PC-9 (cell line): ENCODE measurements at regions of chr17 and their contacts with region 1.

Region 1: DNA sequence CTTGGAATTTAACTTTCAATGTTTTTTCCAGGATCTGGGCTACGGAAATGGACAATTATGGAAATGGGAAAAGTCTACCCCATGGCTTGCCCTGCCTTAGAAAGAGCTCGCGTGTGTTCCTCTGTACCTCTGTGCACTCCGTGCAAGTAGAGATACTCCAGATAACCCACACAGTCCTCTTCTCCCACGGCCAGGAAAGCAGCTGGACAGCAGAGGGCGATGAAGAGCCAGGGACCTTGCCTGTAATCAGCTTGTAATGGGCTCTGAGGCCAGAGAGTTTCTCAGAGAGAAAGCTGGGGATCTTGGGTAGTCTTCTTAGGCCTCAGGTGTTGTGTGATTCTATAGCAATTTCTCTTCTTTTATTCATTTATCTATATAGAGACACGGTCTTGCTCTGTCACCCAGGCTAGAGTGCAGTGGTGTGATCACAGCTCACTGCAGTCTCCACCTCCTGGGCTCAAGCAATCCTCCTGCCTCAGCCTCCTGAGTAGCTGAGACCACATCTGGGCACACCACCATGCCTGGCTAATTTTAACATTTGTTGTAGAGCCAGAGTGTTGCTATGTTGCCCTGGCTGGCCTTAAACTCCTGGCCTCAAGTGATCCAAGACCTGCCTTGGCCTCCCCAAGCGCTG is 2.4 kb upstream of the SOCS7 start:
- DNase-seq: peak; percentile 61 to 78
- H3K4me3 ChIP-seq: no peak overlapping the region
- H3K27ac ChIP-seq: no peak overlapping the region
- H3K4me1 ChIP-seq: peaks cover 23% of the 10 kb centered on the region
- H3K27me3 ChIP-seq: no peaks in the 10 kb centered on the region
- CTCF ChIP-seq: peak; percentile 88

Region 2: DNA sequence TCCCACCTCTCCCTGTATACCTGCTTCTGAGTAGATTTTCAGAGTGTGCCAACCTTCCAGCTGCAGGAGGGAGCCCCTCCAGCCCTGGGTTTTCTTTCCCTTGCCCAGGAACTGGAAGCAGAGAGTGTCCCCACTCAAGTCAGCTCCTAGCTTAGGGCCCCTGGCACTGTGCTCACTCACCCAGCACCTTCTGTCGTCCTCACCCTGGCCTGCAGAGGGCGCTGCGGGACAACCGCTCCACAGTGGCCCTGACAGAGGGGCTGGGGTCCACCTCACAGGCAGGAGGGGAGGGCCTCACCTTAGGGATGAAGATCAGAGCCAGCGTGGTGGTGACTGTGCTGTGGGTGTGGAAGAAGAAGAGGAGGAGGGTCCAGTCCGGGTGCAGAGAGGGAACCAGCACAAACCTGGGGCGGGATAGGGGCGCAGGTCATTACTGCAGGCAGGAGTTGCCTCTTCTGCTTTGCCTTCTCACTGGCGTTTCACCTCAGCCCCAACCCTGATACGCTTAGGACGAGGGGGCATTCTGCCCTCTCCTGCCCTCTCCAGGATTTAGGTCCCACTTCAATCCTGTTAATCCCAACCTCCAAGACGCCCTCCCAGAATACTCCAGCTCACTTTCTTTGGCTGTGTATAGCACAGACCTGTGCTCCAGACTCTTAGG is 15.4 kb before region 1 on chr17:
- CTCF ChIA-PET with region 1: interaction called, 10 read pairs
- POLR2A ChIA-PET with region 1: no interaction called
- intact Hi-C with region 1: no loop called
- DNase-seq: peak in 1 of 2 experiments; percentile 47
- H3K4me3 ChIP-seq: no peak overlapping the region
- H3K27ac ChIP-seq: no peak overlapping the region
- H3K4me1 ChIP-seq: no peaks in the 10 kb centered on the region
- H3K27me3 ChIP-seq: peaks cover 12% of the 10 kb centered on the region; the same call in 1 of the 2 replicates
- CTCF ChIP-seq: peak; percentile 87

Region 3: GRCh38 chr17:38415250-38416194 is 66.3 kb after region 1 on chr17:
- CTCF ChIA-PET with region 1: interaction called, 36 read pairs
- POLR2A ChIA-PET with region 1: no interaction called
- intact Hi-C with region 1: loop called (anchors 1 kb)
- DNase-seq: peak in 1 of 2 experiments; percentile 47
- H3K4me3 ChIP-seq: peak overlapping the region; percentile 51; the same call in 1 of the 2 replicates
- H3K27ac ChIP-seq: peak overlapping the region; percentile 75
- H3K4me1 ChIP-seq: peaks cover 22% of the 10 kb centered on the region
- H3K27me3 ChIP-seq: 0 out of 2 replicates have a peak, but pooled peaks cover 14% of the 10 kb centered on the region
- CTCF ChIP-seq: no peak